ENCODE measurements at regions of chrX and their contacts with region 1.

Region 1: GRCh38 chrX:41333744-41334259 is at the start of gene DDX3X:
- DNase-seq: peak; percentile 84 to 91
- H3K4me3 ChIP-seq: peak within 1 kb of the TSS; percentile 100
- H3K4me1 ChIP-seq: peaks cover 46% of the 10 kb centered on the region
- H3K27me3 ChIP-seq: no peaks in the 10 kb centered on the region; the same call in 1 of the 2 replicates

Region 2: GRCh38 chrX:41275661-41276609 is 57.9 kb before region 1 on chrX:
- in situ Hi-C with region 1: loop called (anchors 5 kb)
- DNase-seq: peak; percentile 66 to 89
- H3K4me3 ChIP-seq: peak overlapping the region; percentile 52
- H3K4me1 ChIP-seq: peaks cover 10% of the 10 kb centered on the region
- H3K27me3 ChIP-seq: no peaks in the 10 kb centered on the region

Region 3: DNA sequence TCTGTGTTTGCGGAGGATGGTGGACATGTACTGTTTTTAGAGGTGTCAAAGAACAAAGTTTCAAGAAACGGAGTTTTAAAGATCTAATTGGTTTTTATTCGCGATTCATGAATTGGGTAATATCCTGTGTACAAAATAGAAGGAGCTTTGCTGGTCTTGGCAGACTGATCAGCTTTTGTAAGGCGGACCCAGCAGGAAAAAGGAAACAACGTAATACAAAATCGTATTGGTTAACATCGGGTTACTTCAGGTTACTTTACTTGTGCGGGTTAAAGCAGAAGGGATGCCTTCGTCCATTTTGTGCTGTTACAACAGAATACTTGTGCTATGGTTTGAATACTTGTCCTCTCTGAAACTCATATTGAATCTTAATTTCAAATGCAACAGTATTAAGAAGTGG is 101.9 kb after region 1 on chrX:
- in situ Hi-C with region 1: no loop called
- DNase-seq: no peak
- H3K4me3 ChIP-seq: no peak overlapping the region
- H3K4me1 ChIP-seq: peaks cover 4% of the 10 kb centered on the region; the same call in 1 of the 2 replicates
- H3K27me3 ChIP-seq: no peaks in the 10 kb centered on the region